HCT116 (cell line): ENCODE measurements at regions of chr22 and their contacts with region 1.

Region 1: GRCh38 chr22:27880778-27881394 is 38.2 kb downstream of the PITPNB start:
- DNase-seq: peak; percentile 47
- ATAC-seq: peak; percentile 76
- H3K4me3 ChIP-seq: no peak overlapping the region
- H3K27ac ChIP-seq: no peak overlapping the region
- H3K4me1 ChIP-seq: no peaks in the 10 kb centered on the region
- H3K27me3 ChIP-seq: no peaks in the 10 kb centered on the region
- CTCF ChIP-seq: peak; percentile 33 to 74 (median 74); a peak in 5 of 6 replicates
- POLR2A ChIP-seq: no peak
- RAD21 ChIP-seq: peak; percentile 61

Region 2: GRCh38 chr22:28009272-28009827 is 128.5 kb after region 1 on chr22:
- CTCF ChIA-PET with region 1: interaction called, 15 read pairs
- POLR2A ChIA-PET with region 1: no interaction called
- RAD21 ChIA-PET with region 1: interaction called in 1 of 2 experiments, 3 read pairs
- intact Hi-C with region 1: loop called (anchors 1 kb)
- DNase-seq: peak; percentile 49
- ATAC-seq: peak; percentile 96
- H3K4me3 ChIP-seq: no peak overlapping the region
- H3K27ac ChIP-seq: no peak overlapping the region
- H3K4me1 ChIP-seq: no peaks in the 10 kb centered on the region
- H3K27me3 ChIP-seq: no peaks in the 10 kb centered on the region
- CTCF ChIP-seq: peak; percentile 69 to 99 (median 93)
- POLR2A ChIP-seq: no peak
- RAD21 ChIP-seq: peak; percentile 89

Region 3: GRCh38 chr22:28594797-28595462 is 714.0 kb after region 1 on chr22:
- CTCF ChIA-PET with region 1: no interaction called
- POLR2A ChIA-PET with region 1: no interaction called
- RAD21 ChIA-PET with region 1: no interaction called
- intact Hi-C with region 1: loop called (anchors 10 kb)
- DNase-seq: peak; percentile 35
- ATAC-seq: peak; percentile 94
- H3K4me3 ChIP-seq: no peak overlapping the region
- H3K27ac ChIP-seq: no peak overlapping the region
- H3K4me1 ChIP-seq: no peaks in the 10 kb centered on the region
- H3K27me3 ChIP-seq: no peaks in the 10 kb centered on the region
- CTCF ChIP-seq: peak; percentile 63 to 82 (median 66); a peak in 5 of 6 replicates
- POLR2A ChIP-seq: no peak
- RAD21 ChIP-seq: peak; percentile 71